ENCODE measurements at regions of chr6 and their contacts with region 1.

Region 1: GRCh38 chr6:110063594-110064263 is 85.6 kb downstream of the GPR6 start:
- DNase-seq: no peak
- CTCF ChIP-seq: no peak

Region 2: DNA sequence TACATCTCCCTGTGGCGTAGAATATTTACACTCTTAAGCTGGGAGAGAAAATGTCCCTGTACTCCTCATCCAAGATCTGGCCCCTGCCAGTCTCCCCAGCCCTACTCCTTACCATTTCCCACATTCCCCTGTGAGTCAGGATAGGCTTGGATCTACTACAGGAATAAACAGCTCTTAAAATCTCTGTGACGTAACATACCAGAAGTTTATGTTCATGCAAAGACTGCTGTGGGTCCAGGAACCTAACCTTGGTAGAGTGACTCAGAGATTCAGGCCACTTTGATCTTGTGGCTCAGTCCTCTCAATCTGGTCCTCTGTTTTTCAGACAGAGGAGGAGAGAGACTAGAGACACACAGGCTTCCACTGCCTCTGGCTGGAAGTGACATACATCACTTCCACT is 124.1 kb before region 1 on chr6:
- CTCF ChIA-PET with region 1: no interaction called
- POLR2A ChIA-PET with region 1: no interaction called
- DNase-seq: no peak
- CTCF ChIP-seq: no peak

Region 3: DNA sequence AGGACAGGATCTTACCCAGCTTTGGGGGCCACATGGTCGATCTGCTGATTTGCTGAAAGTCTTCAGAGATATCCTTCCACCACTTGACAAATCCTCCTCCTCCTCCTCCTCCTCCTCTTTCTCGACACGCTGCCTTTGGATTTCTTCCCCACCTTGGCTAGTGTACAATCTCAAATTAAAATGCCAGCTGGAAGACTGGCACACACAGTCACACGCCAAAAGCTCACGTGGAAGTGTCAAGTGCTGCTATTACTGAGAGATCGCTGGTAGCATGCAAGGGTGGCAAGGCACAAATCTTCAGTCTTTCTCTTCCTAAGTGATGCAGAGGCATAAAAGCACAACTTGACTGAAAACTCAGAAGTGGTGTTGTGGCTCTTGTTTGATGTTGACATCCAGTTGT is 50.3 kb before region 1 on chr6:
- CTCF ChIA-PET with region 1: no interaction called
- POLR2A ChIA-PET with region 1: no interaction called
- DNase-seq: no peak
- CTCF ChIP-seq: no peak

Region 4: DNA sequence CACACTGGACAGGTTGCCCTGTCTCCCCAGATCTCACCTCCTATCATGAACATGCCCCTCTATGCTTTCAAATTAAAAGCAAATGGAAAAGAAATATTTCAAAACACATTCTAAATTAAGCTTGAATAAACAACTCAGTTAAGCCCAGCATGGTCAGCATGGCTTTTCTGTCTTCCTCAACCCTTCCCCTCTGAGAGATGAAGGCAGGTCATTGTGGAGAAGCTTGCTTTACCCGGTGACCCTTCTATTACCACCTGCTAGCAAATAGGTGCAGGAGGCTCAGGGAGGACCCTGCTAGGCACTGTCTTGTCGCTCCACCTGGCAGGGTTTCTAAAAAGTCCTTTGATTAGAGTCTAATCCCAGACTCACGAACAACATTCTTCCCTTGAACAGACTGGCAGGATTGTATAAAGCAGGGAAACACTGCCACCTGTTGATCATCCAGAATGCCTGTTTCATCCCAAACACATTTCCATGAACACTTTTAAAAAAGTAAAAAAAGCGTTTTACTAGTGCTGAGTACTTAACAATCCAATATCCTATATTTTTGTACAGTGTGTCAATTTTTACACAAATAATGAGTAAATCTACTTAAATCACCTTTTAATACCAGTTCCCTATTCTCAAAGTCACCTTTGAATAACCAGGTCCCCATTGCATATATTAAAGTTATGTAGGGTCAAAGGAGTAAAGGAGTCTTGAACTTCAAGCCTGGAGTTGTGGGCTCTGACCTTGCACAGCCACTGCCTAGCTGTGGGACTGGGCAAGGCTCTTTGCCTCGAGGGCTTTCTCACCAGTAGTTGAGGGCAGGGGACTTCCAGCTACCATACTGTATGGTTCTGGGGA is 10.1 kb before region 1 on chr6:
- CTCF ChIA-PET with region 1: interaction called, 13 read pairs
- POLR2A ChIA-PET with region 1: no interaction called
- DNase-seq: peak; percentile 50
- CTCF ChIP-seq: peak; percentile 70

Region 5: DNA sequence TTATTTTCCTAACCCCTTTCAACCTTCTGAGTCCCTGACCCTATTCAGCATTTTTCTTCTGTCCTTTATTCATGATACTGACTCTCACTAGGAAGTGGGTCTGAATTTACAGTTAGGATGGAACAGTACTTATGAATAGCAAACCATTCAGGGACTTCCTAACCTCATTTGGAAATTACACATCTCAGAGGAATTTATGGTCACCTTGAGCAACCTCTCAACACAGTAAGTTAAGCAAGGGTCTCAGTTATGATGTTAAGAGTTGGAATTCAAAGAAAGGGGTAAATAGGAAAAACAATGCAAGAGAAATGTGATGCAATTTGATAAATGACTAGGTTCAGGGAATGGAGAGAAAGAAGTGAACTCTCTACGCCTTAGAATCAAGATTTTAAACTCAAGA is 11.7 kb after region 1 on chr6:
- CTCF ChIA-PET with region 1: interaction called, 10 read pairs
- POLR2A ChIA-PET with region 1: no interaction called
- DNase-seq: no peak
- CTCF ChIP-seq: no peak

Region 6: GRCh38 chr6:110217266-110217665 is 153.5 kb after region 1 on chr6:
- CTCF ChIA-PET with region 1: no interaction called
- POLR2A ChIA-PET with region 1: no interaction called
- DNase-seq: no peak
- CTCF ChIP-seq: no peak

Measured in GM10248 (cell line).